ENCODE measurements at regions of chr19 and their contacts with region 1.

Region 1: DNA sequence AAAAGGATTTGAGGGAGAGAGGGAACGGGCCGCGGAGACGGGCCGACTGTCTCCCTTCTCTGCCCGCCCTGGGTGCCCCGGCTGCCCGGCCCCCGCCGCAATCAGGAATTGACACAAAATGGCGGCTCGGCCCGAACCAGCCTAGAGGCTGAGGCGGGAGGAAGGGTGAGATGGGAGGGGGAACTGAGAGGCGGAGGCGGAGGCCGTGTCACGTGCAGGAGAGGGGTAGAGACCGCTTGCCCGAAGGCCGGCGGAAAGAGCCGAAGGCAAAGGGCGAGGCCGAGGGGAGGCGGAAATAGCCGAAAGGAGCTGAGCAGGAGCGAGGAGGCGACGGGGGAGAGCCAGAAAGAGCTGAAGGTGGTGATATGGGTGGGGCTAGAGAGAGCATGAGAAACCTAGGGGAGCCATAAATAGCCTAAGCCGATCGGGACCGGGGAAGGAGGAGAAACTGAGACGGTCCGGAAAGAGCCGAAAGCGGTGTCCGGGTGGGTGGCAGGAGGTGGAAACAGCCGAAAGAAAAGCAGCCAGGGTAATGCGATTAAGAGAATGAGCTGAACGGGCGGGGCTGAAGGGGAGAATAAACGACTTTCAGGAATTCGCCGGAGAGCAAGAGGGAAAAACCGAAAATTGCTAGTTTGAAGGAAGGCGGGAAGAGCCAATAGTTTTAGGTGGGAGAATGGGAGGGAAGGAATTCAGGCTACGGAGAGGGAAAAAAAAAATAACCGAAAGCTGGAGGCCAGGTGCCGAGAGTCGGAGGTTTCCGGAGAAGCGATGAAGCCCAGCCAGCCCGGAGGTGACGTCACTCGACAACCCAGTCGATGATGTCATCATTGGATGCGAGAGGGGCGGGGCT is at the start of gene ZC3H4:
- DNase-seq: peak; percentile 96 to 100 (median 100)
- ATAC-seq: peak; percentile 90
- H3K4me3 ChIP-seq: peak within 1 kb of the TSS; percentile 84
- H3K4me3 Mint-ChIP-seq: peak within 1 kb of the TSS; percentile 93 to 100 (median 98)
- H3K27ac ChIP-seq: peak within 1 kb of the TSS; percentile 99
- H3K27ac Mint-ChIP-seq: peak within 1 kb of the TSS; percentile 99 to 100 (median 100)
- H3K4me1 ChIP-seq: peaks cover 17 to 25% of the 10 kb centered on the region in 2 donors
- H3K4me1 Mint-ChIP-seq: peaks cover 22 to 38% (median 35%) of the 10 kb centered on the region in 7 donors
- H3K27me3 ChIP-seq: no peaks in the 10 kb centered on the region
- H3K27me3 Mint-ChIP-seq: peaks cover 0 to 2% (median 0%) of the 10 kb centered on the region in 5 donors
- total RNA-seq, gene ZC3H4: 53.6 to 123 (median 73.0) TPM

Region 2: DNA sequence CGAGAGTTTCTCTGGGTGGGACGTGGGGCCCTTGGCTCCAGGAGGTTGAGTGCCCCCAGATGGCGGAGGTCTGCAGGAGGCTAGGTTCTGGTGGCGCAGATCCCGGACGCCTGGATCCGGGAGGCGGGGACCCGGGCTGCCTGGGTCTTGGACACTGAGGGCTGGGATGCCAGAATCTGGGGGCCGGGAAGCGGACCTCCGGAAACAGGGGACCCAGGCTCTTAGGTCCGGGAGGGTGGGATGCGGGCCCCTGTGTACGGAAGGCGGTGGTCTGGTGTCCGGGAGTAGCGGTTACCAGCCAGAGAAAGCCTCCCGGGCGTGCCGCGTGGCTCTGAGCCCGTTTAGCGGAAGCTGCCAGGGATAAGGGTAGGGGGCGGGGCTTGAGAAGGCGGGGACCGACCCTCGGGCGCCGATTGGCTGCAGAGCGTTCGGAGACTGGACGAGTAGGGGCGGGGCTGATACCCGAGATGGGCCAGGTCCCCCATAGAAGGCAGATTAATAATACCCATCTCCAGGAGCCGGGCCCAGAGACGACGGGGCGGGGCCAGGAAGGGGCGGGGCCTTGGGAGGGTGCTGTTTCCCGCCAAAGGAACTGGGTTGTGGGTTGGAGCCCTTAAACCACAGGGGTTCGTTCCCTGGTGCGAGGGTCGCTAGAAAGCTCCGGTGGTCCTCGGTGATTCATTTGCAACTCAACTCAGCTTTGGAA is 324.8 kb before region 1 on chr19 and contains the start of gene SLC1A5:
- CTCF ChIA-PET with region 1: no interaction called
- POLR2A ChIA-PET with region 1: no interaction called
- intact Hi-C with region 1: loop called (anchors 2 to 5 kb)
- DNase-seq: peak; percentile 77 to 98 (median 84)
- ATAC-seq: peak; percentile 93
- H3K4me3 ChIP-seq: peak within 1 kb of the TSS; percentile 77
- H3K4me3 Mint-ChIP-seq: peak within 1 kb of the TSS; percentile 85 to 91 (median 89)
- H3K27ac ChIP-seq: peak within 1 kb of the TSS; percentile 62
- H3K27ac Mint-ChIP-seq: peak within 1 kb of the TSS; percentile 25 to 92 (median 86)
- H3K4me1 ChIP-seq: peaks cover 31 to 44% of the 10 kb centered on the region in 2 donors
- H3K4me1 Mint-ChIP-seq: peaks cover 19 to 72% (median 60%) of the 10 kb centered on the region in 7 donors
- H3K27me3 ChIP-seq: no peaks in the 10 kb centered on the region
- H3K27me3 Mint-ChIP-seq: peaks cover 0 to 3% (median 0%) of the 10 kb centered on the region in 5 donors
- total RNA-seq, gene SLC1A5: 3.5 to 120 (median 5.3) TPM

Region 3: GRCh38 chr19:46924874-46925547 is 188.2 kb before region 1 on chr19:
- CTCF ChIA-PET with region 1: no interaction called
- POLR2A ChIA-PET with region 1: no interaction called
- intact Hi-C with region 1: no loop called
- DNase-seq: peak in 1 of 9 donors; percentile 1
- ATAC-seq: peak; percentile 61
- H3K4me3 ChIP-seq: no peak overlapping the region
- H3K4me3 Mint-ChIP-seq: no peak overlapping the region
- H3K27ac ChIP-seq: no peak overlapping the region
- H3K27ac Mint-ChIP-seq: peak overlapping the region in 4 of 9 donors; percentile 1 to 82 (median 14)
- H3K4me1 ChIP-seq: peaks cover 12 to 43% of the 10 kb centered on the region in 2 donors
- H3K4me1 Mint-ChIP-seq: peaks cover 23 to 51% (median 46%) of the 10 kb centered on the region in 7 donors
- H3K27me3 ChIP-seq: no peaks in the 10 kb centered on the region
- H3K27me3 Mint-ChIP-seq: no peaks in the 10 kb centered on the region

Region 4: DNA sequence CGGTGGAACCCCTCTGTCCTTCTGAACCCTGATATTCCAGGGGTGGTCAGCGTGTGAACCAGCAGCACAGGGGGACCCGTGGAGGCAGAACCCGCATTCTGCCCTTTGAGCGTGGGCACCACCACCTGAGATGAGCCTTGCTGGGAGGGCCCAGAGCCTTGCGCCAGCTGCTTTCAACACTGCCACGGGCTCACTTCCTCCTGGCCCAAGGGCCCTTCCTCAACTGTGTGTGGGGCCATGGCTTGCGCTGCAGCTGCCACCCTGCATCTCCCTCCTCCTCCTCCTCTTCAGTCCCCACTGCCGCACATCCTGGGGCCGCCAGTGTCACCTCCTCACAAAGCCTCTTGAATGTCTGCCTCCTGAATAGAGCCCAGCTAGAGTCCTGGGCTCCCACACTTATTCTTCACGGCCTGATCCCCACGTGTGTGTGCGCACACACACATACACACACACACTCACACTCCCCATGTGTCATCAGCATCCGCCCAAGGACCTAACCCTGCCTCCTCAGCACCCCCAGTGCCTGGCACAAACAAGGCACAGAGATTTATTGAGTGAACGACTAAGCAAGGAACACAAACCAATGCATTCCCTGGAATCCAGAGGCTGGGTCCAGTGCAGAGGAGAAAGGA is 37.9 kb before region 1 on chr19:
- CTCF ChIA-PET with region 1: interaction called, 32 read pairs
- POLR2A ChIA-PET with region 1: interaction called, 51 read pairs
- intact Hi-C with region 1: loop called (anchors 1 kb)
- DNase-seq: no peak
- ATAC-seq: peak; percentile 74
- H3K4me3 ChIP-seq: no peak overlapping the region
- H3K4me3 Mint-ChIP-seq: no peak overlapping the region
- H3K27ac ChIP-seq: no peak overlapping the region
- H3K27ac Mint-ChIP-seq: peak overlapping the region in 4 of 9 donors; percentile 19 to 76 (median 48)
- H3K4me1 ChIP-seq: no peaks in the 10 kb centered on the region
- H3K4me1 Mint-ChIP-seq: peaks cover 6 to 29% (median 14%) of the 10 kb centered on the region in 7 donors
- H3K27me3 ChIP-seq: no peaks in the 10 kb centered on the region
- H3K27me3 Mint-ChIP-seq: no peaks in the 10 kb centered on the region

Region 5: GRCh38 chr19:47130591-47131227 is 17.5 kb after region 1 on chr19 and contains the start of gene SAE1:
- CTCF ChIA-PET with region 1: interaction called, 7 read pairs
- POLR2A ChIA-PET with region 1: interaction called, 12 read pairs
- intact Hi-C with region 1: loop called (anchors 1 kb)
- DNase-seq: peak; percentile 84 to 97 (median 91)
- ATAC-seq: peak; percentile 94
- H3K4me3 ChIP-seq: peak within 1 kb of the TSS; percentile 98
- H3K4me3 Mint-ChIP-seq: peak within 1 kb of the TSS; percentile 92 to 100 (median 99)
- H3K27ac ChIP-seq: peak within 1 kb of the TSS; percentile 85
- H3K27ac Mint-ChIP-seq: peak within 1 kb of the TSS; percentile 87 to 97 (median 92)
- H3K4me1 ChIP-seq: peaks cover 11 to 25% of the 10 kb centered on the region in 2 donors
- H3K4me1 Mint-ChIP-seq: peaks cover 44 to 57% (median 52%) of the 10 kb centered on the region in 7 donors
- H3K27me3 ChIP-seq: no peaks in the 10 kb centered on the region
- H3K27me3 Mint-ChIP-seq: peaks cover 0 to 7% (median 0%) of the 10 kb centered on the region in 5 donors
- total RNA-seq, gene SAE1: 34.3 to 115 (median 46.4) TPM

Region 6: GRCh38 chr19:47231215-47231984 is 118.2 kb after region 1 on chr19:
- CTCF ChIA-PET with region 1: no interaction called
- POLR2A ChIA-PET with region 1: interaction called, 8 read pairs
- intact Hi-C with region 1: loop called (anchors 1 kb)
- DNase-seq: peak; percentile 77 to 94 (median 86)
- ATAC-seq: peak; percentile 78
- H3K4me3 ChIP-seq: peak overlapping the region; percentile 54
- H3K4me3 Mint-ChIP-seq: peak overlapping the region in 9 of 10 donors; percentile 69 to 88 (median 81)
- H3K27ac ChIP-seq: peak overlapping the region; percentile 80
- H3K27ac Mint-ChIP-seq: peak overlapping the region; percentile 20 to 92 (median 90)
- H3K4me1 ChIP-seq: peaks cover 36 to 45% of the 10 kb centered on the region in 2 donors
- H3K4me1 Mint-ChIP-seq: peaks cover 20 to 29% (median 24%) of the 10 kb centered on the region in 7 donors
- H3K27me3 ChIP-seq: no peaks in the 10 kb centered on the region
- H3K27me3 Mint-ChIP-seq: peaks cover 0 to 4% (median 0%) of the 10 kb centered on the region in 5 donors

Region 7: GRCh38 chr19:47348819-47349795 is 235.9 kb after region 1 on chr19 and contains the start of gene DHX34:
- CTCF ChIA-PET with region 1: no interaction called
- POLR2A ChIA-PET with region 1: interaction called, 3 read pairs
- intact Hi-C with region 1: loop called in 1 of 2 experiments (anchors 1 kb)
- DNase-seq: peak; percentile 97 to 100 (median 99)
- ATAC-seq: peak; percentile 100
- H3K4me3 ChIP-seq: peak within 1 kb of the TSS; percentile 92
- H3K4me3 Mint-ChIP-seq: peak within 1 kb of the TSS; percentile 91 to 100 (median 97)
- H3K27ac ChIP-seq: peak within 1 kb of the TSS; percentile 83
- H3K27ac Mint-ChIP-seq: peak within 1 kb of the TSS; percentile 88 to 97 (median 95)
- H3K4me1 ChIP-seq: peaks cover 0 to 12% of the 10 kb centered on the region in 2 donors
- H3K4me1 Mint-ChIP-seq: peaks cover 19 to 46% (median 44%) of the 10 kb centered on the region in 7 donors
- H3K27me3 ChIP-seq: no peaks in the 10 kb centered on the region
- H3K27me3 Mint-ChIP-seq: peaks cover 0 to 3% (median 0%) of the 10 kb centered on the region in 5 donors
- total RNA-seq, gene DHX34: 15.6 to 31.6 (median 29.5) TPM

Region 8: DNA sequence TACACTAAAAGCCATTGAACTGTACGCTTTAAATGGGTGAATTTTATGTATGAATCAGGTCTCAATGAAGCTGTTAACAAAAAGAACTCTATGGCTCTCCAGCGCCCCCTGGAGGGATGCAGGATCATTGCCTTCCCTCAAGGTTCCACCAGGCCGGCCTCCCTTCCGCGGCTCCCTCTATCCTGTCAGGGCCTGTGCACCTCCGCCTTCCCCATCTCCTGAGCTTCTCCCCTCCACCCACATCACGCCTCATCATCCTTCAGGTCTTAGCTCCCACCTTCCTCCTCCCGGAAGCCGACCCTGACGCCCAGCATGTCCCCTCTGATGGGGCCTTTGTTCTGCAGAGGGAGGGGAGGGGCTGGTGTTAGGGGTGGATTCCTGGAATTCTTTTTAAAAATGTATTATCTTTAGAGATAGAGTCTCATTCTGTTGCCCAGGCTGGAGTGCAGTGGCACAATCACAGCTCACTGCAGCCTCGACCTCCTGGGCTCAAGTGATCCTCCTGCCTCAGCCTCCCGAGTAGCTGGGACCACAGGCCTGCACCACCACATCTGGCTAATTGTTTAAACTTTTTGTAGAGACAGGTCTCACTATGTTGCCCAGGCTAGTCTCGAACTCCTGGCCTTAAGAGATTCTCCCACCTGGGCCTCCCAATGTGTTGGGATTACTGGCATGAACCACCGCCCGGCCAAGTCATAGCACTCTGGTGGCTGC is 278.4 kb after region 1 on chr19:
- CTCF ChIA-PET with region 1: no interaction called
- POLR2A ChIA-PET with region 1: no interaction called
- intact Hi-C with region 1: no loop called
- DNase-seq: peak; percentile 56 to 80 (median 74)
- ATAC-seq: peak; percentile 68
- H3K4me3 ChIP-seq: no peak overlapping the region
- H3K4me3 Mint-ChIP-seq: peak overlapping the region in 1 of 10 donors; percentile 17
- H3K27ac ChIP-seq: no peak overlapping the region
- H3K27ac Mint-ChIP-seq: peak overlapping the region in 1 of 9 donors; percentile 67
- H3K4me1 ChIP-seq: no peaks in the 10 kb centered on the region
- H3K4me1 Mint-ChIP-seq: peaks cover 0 to 5% (median 0%) of the 10 kb centered on the region in 7 donors
- H3K27me3 ChIP-seq: no peaks in the 10 kb centered on the region
- H3K27me3 Mint-ChIP-seq: peaks cover 7 to 21% (median 16%) of the 10 kb centered on the region in 5 donors

Measured in naive thymus-derived CD4-positive, alpha-beta T cell (primary cell).